Panc1 (cell line): ENCODE measurements at regions of chr12 and their contacts with region 1.

Region 1: GRCh38 chr12:123645878-123646277 is 12.2 kb downstream of the GTF2H3 start:
- DNase-seq: no peak
- ATAC-seq: no peak
- H3K4me3 ChIP-seq: no peak overlapping the region
- H3K27ac ChIP-seq: no peak overlapping the region
- H3K4me1 ChIP-seq: no peaks in the 10 kb centered on the region
- H3K27me3 ChIP-seq: no peaks in the 10 kb centered on the region
- CTCF ChIP-seq: no peak

Region 2: GRCh38 chr12:123591702-123592481 is 54.0 kb before region 1 on chr12:
- CTCF ChIA-PET with region 1: no interaction called
- POLR2A ChIA-PET with region 1: interaction called, 10 read pairs
- in situ Hi-C with region 1: no loop called
- intact Hi-C with region 1: no loop called
- DNase-seq: no peak
- ATAC-seq: no peak
- H3K4me3 ChIP-seq: no peak overlapping the region
- H3K27ac ChIP-seq: no peak overlapping the region
- H3K4me1 ChIP-seq: peaks cover 14% of the 10 kb centered on the region; the same call in 1 of the 2 replicates
- H3K27me3 ChIP-seq: no peaks in the 10 kb centered on the region
- CTCF ChIP-seq: no peak

Region 3: GRCh38 chr12:124240493-124240892 is 594.6 kb after region 1 on chr12:
- CTCF ChIA-PET with region 1: no interaction called
- POLR2A ChIA-PET with region 1: interaction called, 11 read pairs
- in situ Hi-C with region 1: no loop called
- intact Hi-C with region 1: no loop called
- DNase-seq: no peak
- ATAC-seq: peak; percentile 64; the same call in 1 of the 2 replicates
- H3K4me3 ChIP-seq: no peak overlapping the region
- H3K27ac ChIP-seq: no peak overlapping the region
- H3K4me1 ChIP-seq: no peaks in the 10 kb centered on the region; the same call in 1 of the 2 replicates
- H3K27me3 ChIP-seq: no peaks in the 10 kb centered on the region
- CTCF ChIP-seq: no peak

Region 4: DNA sequence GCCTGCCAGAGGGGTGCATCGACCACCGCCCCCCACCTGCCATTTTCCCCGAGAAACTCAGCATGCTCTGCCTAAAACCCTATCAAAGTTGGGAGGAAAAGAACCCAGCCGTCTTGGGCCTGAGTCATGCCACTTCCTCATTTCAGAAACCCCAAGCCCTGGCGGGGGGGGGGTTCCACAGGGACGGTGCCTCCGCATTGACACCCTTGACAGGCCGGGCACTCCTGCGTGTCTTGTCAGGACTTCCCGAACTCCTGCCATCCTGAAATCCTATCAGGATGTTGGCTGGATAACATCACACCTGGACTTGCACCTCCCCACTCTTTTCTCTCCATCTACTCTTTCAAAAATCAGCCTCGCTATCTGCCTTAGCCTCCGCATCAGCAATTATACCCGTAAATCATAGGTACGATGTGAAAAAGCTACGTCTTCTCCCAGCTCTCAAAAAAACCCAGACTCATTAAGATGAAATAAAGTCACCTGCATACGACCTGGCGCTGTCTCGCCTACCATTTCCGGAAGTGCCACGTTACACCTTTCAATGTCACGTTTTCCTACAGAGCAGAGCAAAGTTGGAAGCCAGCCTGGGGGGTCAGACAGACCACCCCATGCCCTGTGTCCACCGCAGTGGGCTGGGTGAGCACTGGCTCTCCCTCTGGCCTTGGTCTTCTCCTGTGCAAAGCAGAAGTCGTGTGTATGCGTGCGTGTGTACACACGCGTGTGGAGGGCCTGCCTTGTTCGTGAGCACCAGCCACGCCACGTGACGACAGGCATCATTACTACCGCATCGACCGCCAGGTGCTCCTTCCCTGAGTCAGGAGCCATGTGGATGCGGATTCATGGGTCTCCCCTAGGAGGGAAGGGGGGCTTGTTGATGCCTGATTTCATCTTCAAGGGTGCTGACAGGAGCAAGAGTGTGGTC is 745.7 kb after region 1 on chr12:
- CTCF ChIA-PET with region 1: no interaction called
- POLR2A ChIA-PET with region 1: no interaction called
- in situ Hi-C with region 1: no loop called
- intact Hi-C with region 1: no loop called
- DNase-seq: no peak
- ATAC-seq: no peak
- H3K4me3 ChIP-seq: no peak overlapping the region
- H3K27ac ChIP-seq: peak overlapping the region; percentile 94
- H3K4me1 ChIP-seq: peaks cover 73% of the 10 kb centered on the region
- H3K27me3 ChIP-seq: no peaks in the 10 kb centered on the region
- CTCF ChIP-seq: no peak